ENCODE measurements at regions of chr6 and their contacts with region 1.

Region 1: DNA sequence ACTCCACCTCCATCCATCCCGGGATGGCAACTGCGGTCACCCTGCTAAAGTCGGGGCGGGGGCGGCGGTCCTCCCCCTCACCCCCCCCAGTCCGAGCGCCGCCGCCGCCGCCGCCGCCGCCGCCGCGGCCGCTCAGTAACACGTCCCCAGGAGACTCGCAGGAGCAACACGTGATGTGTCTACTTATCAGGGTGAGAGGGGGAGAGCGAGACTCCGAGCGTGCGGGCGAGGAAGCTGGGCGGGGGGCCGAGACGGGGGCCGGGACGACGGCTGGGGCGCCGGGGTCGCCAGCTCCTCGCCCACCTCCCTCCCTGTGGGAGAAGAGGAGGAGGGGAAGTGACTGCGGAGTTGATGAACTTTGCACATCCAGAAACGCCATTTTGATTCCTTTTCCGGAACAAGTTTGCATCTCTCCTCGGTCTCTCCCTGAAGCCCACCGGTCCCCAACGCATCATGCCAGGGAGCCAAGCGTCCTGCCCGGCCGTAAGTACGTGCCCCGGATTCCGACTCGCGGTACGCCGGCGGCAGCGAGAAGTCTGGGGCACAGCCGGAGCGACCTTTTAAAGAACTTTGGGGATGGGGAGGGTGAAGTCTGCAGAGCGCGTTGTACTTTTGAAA is at the start of gene RREB1:
- DNase-seq: peak; percentile 62 to 70
- ATAC-seq: peak; percentile 66 to 85 (median 75)
- H3K4me3 ChIP-seq: peak within 1 kb of the TSS; percentile 71 to 99 (median 84)
- H3K27ac ChIP-seq: peak within 1 kb of the TSS; percentile 86 to 98 (median 95)
- H3K4me1 ChIP-seq: peaks cover 0 to 46% (median 34%) of the 10 kb centered on the region in 9 donors
- H3K27me3 ChIP-seq: no peaks in the 10 kb centered on the region
- CTCF ChIP-seq: no peak
- total RNA-seq, gene RREB1: 32.2 to 47.1 (median 36.8) TPM

Region 2: GRCh38 chr6:6927521-6928371 is 179.9 kb before region 1 on chr6:
- intact Hi-C with region 1: loop called in 1 of 10 experiments (anchors 5 kb)
- DNase-seq: peak; percentile 45 to 52
- ATAC-seq: peak; percentile 77 to 94 (median 89)
- H3K4me3 ChIP-seq: peak overlapping the region in 8 of 10 donors; percentile 26 to 54 (median 46)
- H3K27ac ChIP-seq: peak overlapping the region; percentile 22 to 84 (median 76)
- H3K4me1 ChIP-seq: peaks cover 0 to 27% (median 0%) of the 10 kb centered on the region in 9 donors
- H3K27me3 ChIP-seq: no peaks in the 10 kb centered on the region
- CTCF ChIP-seq: peak in 4 of 9 donors; percentile 35 to 46 (median 38)

Region 3: DNA sequence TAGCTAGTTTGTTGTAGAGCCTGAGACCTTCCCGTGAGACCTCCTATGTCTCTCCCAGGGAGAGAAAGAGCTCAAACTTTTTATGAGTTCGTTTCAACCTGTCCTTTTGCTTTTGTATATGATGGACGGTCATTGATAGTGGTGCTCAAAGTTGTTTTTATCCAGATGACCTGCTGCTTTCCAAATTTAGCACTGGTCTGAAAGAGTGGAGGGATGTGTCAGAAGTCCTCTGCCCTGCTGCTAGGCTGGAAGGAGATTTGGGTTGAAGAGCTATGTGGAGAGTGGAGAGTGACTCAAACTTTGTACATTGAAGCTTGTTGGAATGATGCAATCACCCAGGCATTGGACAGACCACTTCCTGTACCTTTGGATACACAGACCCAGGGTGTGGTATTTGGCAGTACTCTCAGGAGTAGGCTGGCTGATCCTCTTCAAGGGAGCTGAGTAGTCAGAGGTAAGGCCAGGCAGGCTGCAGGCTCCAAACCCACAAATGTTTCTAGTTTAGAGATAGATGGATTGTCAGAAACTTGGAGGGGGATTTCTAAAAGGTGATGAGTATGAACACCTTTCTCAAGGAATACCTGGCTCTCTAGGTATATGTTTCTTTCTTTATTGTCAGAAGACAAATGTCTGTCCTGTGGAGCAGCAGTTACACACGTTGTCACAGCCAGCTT is 49.3 kb before region 1 on chr6:
- intact Hi-C with region 1: loop called in 1 of 10 experiments (anchors 5 kb)
- DNase-seq: no peak
- ATAC-seq: peak in 4 of 8 donors; percentile 39 to 95 (median 68)
- H3K4me3 ChIP-seq: no peak overlapping the region
- H3K27ac ChIP-seq: no peak overlapping the region
- H3K4me1 ChIP-seq: peaks cover 0 to 13% (median 0%) of the 10 kb centered on the region in 9 donors
- H3K27me3 ChIP-seq: no peaks in the 10 kb centered on the region
- CTCF ChIP-seq: no peak

Region 4: DNA sequence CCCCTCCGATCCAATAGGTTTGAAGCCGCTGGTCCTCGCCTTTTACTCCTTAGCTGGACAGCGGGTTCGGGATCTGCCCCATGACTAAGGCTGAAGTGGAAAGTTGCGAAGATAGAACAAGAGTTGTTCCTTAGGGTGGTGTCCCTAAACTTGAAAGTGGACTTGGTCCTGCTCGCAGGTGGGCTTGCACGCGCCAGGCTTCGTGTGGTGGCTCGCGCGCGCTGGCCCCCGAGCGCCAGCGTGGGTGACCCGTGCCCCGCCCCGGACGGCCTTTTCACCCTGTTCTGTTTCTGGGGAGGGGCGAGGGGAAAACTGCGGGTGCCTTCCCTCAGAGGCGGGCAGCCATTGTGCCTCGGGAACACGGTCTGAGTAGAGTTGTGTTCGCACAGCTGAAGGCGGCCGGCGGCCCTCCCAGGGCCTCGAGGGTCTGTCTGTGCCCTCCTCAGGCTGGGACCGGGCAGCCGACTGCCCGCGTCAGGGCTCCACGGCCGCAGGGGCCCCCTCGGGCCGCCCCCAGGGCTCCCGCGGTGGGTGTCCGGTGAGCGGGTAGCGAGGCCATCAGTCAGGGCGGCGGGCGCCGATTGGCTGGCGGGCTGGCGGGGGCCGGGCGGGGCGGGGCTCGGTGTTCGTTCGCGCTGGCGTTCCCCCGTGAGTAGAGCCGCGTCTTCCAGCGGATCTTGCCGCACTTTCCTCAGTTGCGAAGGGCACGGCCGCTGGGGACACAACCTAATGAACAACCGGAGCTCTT is 33.1 kb after region 1 on chr6:
- intact Hi-C with region 1: loop called in 5 of 10 experiments (anchors 2 to 5 kb)
- DNase-seq: peak; percentile 89 to 92
- ATAC-seq: peak; percentile 94 to 97 (median 96)
- H3K4me3 ChIP-seq: peak overlapping the region; percentile 56 to 82 (median 75)
- H3K27ac ChIP-seq: peak overlapping the region; percentile 91 to 99 (median 96)
- H3K4me1 ChIP-seq: peaks cover 13 to 94% (median 86%) of the 10 kb centered on the region in 9 donors
- H3K27me3 ChIP-seq: no peaks in the 10 kb centered on the region
- CTCF ChIP-seq: no peak

Region 5: GRCh38 chr6:7224731-7225130 is 117.0 kb after region 1 on chr6:
- intact Hi-C with region 1: loop called in 2 of 10 experiments (anchors 5 to 10 kb)
- DNase-seq: no peak
- ATAC-seq: peak in 7 of 8 donors; percentile 25 to 93 (median 72)
- H3K4me3 ChIP-seq: no peak overlapping the region
- H3K27ac ChIP-seq: peak overlapping the region in 9 of 10 donors; percentile 5 to 76 (median 42)
- H3K4me1 ChIP-seq: peaks cover 16 to 46% (median 35%) of the 10 kb centered on the region in 9 donors
- H3K27me3 ChIP-seq: no peaks in the 10 kb centered on the region
- CTCF ChIP-seq: no peak

Region 6: GRCh38 chr6:7300926-7301325 is 193.2 kb after region 1 on chr6:
- intact Hi-C with region 1: no loop called
- DNase-seq: no peak
- ATAC-seq: no peak
- H3K4me3 ChIP-seq: no peak overlapping the region
- H3K27ac ChIP-seq: no peak overlapping the region
- H3K4me1 ChIP-seq: no peaks in the 10 kb centered on the region
- H3K27me3 ChIP-seq: no peaks in the 10 kb centered on the region
- CTCF ChIP-seq: no peak

Region 7: DNA sequence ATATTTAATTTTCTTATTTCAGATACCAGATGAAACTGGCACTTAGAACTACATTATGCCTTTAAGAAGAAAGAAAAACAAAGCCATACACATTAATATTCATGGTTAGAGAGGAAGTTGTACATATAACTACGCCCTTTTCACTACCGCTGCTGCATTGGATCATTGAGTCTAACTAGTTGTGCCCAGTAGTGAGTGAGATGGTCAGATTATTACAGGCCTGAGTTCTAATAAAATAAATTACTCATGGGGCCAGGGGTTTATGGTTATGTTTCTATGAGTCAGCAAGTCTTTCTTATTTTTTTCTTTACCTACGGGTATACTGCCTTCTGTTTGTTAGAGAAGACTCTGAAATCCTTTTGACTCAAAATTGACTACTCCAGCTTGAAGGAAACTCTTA is 293.4 kb after region 1 on chr6:
- intact Hi-C with region 1: no loop called
- DNase-seq: no peak
- ATAC-seq: no peak
- H3K4me3 ChIP-seq: no peak overlapping the region
- H3K27ac ChIP-seq: no peak overlapping the region
- H3K4me1 ChIP-seq: peaks cover 0 to 3% (median 0%) of the 10 kb centered on the region in 9 donors
- H3K27me3 ChIP-seq: no peaks in the 10 kb centered on the region
- CTCF ChIP-seq: no peak

Region 8: DNA sequence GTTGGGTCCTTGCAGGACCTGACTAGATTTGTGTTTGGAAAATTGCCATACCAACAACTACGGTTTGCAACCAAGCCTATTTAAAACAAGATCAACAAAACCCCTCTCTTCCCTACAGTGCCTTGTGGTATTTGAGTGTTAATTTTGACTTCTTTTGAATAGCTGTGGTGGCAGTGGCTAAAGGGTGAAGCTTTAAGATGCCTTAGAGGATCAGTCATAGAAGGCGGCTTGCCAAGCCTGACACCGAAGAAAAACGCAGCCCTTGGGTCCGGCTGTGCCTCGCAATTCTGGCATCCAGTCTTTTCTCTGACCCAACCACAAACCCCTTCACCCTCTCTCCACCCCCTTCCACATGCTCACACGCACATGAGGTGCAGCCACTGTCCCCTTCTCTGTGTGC is 650.8 kb after region 1 on chr6:
- intact Hi-C with region 1: no loop called
- DNase-seq: no peak
- ATAC-seq: peak in 2 of 8 donors; percentile 10 to 42
- H3K4me3 ChIP-seq: no peak overlapping the region
- H3K27ac ChIP-seq: no peak overlapping the region
- H3K4me1 ChIP-seq: no peaks in the 10 kb centered on the region
- H3K27me3 ChIP-seq: peaks cover 0 to 7% (median 0%) of the 10 kb centered on the region in 7 donors
- CTCF ChIP-seq: no peak